Dorsolateral prefrontal cortex (tissue), 120 donors: ENCODE measurements at regions of chrX and their contacts with region 1.

Region 1: DNA sequence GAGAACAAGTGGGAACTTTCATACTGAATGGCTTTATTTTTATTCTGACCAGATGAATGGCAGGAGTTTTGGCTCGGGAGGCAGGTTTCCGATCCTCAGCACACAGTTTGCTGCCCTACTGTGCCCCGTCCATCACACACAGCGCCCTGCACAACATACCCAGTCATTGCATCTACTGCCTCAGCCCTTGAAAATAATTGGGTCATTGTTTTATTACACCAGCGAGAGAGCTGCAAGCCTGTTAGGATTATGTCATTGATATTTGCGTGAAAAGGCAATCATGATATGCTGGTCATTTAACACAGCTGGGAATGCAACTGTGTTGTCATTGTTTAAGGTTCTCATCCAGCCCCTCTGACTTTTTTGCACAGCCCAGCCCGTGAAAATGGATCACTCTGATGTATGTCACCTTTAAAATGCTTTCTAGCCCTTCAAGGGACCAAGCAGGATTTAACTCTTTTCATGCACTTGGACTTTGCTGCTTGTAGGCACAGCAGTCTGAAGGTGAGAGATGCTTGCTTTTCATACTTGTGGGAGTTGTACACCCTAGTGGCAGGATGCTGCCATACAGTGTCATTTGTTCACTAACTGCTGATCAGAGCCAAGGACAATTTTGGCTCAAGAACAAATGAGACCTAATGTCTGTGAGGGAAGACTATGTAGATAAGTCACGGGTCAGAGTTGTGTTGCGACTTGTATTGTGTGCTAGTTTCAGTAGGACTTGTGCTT is 62.3 kb downstream of the RTL9 start:
- DNase-seq: peak in 9 of 10 donors; percentile 37 to 81 (median 61)
- H3K4me3 ChIP-seq: peak overlapping the region in 16 of 59 donors; percentile 1 to 48 (median 12)
- H3K27ac ChIP-seq: peak overlapping the region in 21 of 59 donors; percentile 7 to 65 (median 30)
- H3K27me3 ChIP-seq: peaks cover 0 to 80% (median 17%) of the 10 kb centered on the region in 45 donors
- CTCF ChIP-seq: peak in 24 of 56 donors; percentile 5 to 46 (median 16)

Region 2: DNA sequence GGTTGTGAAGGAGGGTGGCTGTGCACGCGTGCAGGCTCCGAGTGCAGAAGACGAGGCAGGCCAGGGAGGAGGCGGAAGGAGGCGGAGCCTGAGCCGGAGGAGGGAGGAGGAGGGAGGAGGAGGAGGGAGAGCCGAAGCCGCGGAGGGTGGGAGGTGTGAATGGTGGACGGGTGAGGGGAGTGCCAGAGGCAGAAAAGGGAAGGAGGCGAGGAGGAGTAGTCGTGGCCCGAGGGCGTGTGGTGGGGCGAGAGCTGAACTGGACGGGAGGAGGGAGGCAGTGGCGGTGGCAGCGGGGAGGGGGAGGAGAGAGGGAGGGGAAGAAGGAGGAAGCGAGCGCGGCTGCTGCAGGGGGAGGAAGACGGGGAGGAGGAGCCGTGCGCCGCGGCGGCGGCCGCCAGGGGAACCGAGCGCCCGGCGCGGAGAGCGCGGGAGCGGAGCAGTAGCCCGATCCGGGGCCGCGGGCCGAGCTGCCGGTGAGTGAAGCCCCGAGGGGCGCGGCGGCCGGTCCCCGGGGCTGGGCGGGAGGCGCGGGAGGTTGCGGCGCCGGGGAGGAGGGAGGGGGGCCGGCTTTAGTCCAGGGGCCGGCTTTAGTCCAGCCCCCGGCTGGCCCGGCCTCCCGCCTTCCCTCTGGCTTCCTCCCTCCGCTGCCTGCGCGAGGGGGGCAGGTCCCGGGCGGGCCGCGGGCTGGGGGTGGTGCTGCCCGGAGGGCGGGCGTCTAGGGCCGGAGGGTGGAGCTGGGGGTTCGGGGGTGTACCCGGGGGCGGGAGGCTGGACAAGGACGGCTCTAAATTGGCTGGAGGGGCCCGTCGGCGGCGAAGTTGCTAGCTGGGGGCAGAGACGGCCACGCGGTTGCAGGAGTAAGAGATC is 418.4 kb before region 1 on chrX and contains the start of gene TMEM164:
- intact Hi-C with region 1: loop called (anchors 10 kb)
- DNase-seq: peak; percentile 42 to 80 (median 70)
- H3K4me3 ChIP-seq: peak within 1 kb of the TSS; percentile 45 to 78 (median 64)
- H3K27ac ChIP-seq: peak within 1 kb of the TSS in 50 of 59 donors; percentile 22 to 86 (median 64)
- H3K27me3 ChIP-seq: peaks cover 0 to 56% (median 11%) of the 10 kb centered on the region in 45 donors
- CTCF ChIP-seq: peak in 5 of 56 donors; percentile 9 to 26 (median 11)
- total RNA-seq, gene TMEM164: 12.7 to 60.9 (median 23.9) TPM

Region 3: GRCh38 chrX:110462957-110463356 is 42.0 kb after region 1 on chrX:
- intact Hi-C with region 1: no loop called
- DNase-seq: no peak
- H3K4me3 ChIP-seq: no peak overlapping the region
- H3K27ac ChIP-seq: no peak overlapping the region
- H3K27me3 ChIP-seq: peaks cover 0 to 66% (median 16%) of the 10 kb centered on the region in 45 donors
- CTCF ChIP-seq: peak in 2 of 56 donors; percentile 18 to 23

Region 4: GRCh38 chrX:110536816-110537215 is 115.9 kb after region 1 on chrX:
- intact Hi-C with region 1: no loop called
- DNase-seq: no peak
- H3K4me3 ChIP-seq: no peak overlapping the region
- H3K27ac ChIP-seq: no peak overlapping the region
- H3K27me3 ChIP-seq: peaks cover 0 to 66% (median 15%) of the 10 kb centered on the region in 45 donors
- CTCF ChIP-seq: no peak